Right cardiac atrium (tissue), 5 donors: ENCODE measurements at regions of chr9 and their contacts with region 1.

Region 1: GRCh38 chr9:68887232-68887631 is 126.7 kb downstream of the PRKACG start:
- DNase-seq: no peak
- ATAC-seq: no peak
- H3K4me3 ChIP-seq: no peak overlapping the region
- H3K27ac ChIP-seq: no peak overlapping the region
- H3K4me1 ChIP-seq: no peaks in the 10 kb centered on the region
- H3K27me3 ChIP-seq: no peaks in the 10 kb centered on the region

Region 2: DNA sequence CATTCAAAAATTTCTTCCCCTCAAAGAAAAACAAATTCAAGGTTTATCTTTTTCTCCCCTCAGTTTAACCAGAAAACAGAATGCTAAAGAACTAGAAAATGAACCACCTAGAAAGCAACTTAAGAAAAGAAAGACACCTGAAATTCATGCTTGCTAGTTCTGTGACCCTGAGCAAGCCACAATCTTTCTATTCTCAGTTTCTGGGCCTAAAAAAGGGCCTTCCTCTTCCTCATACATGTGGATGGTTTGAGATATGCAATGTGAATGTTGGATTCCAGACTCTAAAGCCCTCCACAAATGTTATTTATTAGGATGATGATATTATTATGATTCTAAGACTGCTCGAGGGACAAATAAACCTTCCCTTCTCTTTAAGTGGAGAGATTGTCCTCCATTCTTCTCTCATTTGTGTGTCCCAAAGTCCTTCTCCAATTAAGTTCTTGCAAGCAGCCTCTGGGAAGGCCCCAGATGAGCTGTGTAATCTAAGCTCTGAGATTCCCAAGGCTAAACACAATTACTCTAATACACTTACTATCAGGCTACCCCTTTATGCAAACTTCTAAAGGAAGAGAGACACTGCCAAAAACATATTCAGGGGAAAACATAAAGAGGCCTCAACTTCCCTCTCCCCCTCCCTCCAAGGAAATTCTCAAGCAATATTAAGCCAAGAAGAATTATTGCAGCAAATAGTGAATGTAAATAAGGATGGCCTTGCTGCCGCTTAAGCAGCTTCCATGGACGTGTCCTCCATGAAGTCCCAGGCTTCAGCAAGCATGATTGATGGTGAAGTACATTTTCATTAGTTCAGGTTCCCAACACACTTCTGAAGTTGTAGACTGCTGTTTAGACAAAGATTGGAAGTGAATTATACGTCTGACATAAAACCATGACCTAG is 46.4 kb after region 1 on chr9:
- intact Hi-C with region 1: loop called in 1 of 4 experiments (anchors 10 kb)
- DNase-seq: no peak
- ATAC-seq: no peak
- H3K4me3 ChIP-seq: no peak overlapping the region
- H3K27ac ChIP-seq: no peak overlapping the region
- H3K4me1 ChIP-seq: no peaks in the 10 kb centered on the region
- H3K27me3 ChIP-seq: no peaks in the 10 kb centered on the region